ENCODE measurements at regions of chr14 and their contacts with region 1.

Region 1: GRCh38 chr14:100306420-100307219 is at the start of gene SLC25A29:
- DNase-seq: peak; percentile 39 to 89 (median 76)
- ATAC-seq: peak; percentile 77
- H3K4me3 ChIP-seq: peak within 1 kb of the TSS; percentile 60 to 76
- H3K4me3 Mint-ChIP-seq: peak within 1 kb of the TSS; percentile 86
- H3K27ac ChIP-seq: no peak within 1 kb of the TSS
- H3K27ac Mint-ChIP-seq: peak within 1 kb of the TSS; percentile 60
- H3K4me1 ChIP-seq: peaks cover 18% of the 10 kb centered on the region
- H3K4me1 Mint-ChIP-seq: peaks cover 18% of the 10 kb centered on the region
- H3K27me3 ChIP-seq: no peaks in the 10 kb centered on the region
- H3K27me3 Mint-ChIP-seq: no peaks in the 10 kb centered on the region
- CTCF ChIP-seq: no peak
- total RNA-seq, gene SLC25A29: 19.4 to 22.8 TPM

Region 2: DNA sequence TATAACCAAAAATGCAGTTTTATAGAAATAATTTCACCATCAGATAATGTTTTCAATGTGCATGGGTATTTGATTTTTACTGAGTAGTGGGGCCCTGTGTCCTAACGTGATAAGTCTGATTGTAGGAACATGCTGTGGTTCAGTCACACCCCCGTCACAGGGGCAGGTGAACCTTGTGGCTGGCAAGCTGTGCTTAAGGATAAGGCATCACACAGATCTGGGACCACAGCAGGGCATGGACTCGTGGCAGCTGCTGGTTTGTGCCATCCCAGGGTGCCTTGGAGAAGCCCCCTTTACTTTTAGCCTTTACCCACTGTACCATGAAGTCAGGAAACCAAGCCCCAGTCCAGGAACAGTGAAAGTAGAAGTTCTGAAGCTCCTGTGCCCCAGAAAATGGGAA is 808.7 kb before region 1 on chr14:
- CTCF ChIA-PET with region 1: no interaction called
- POLR2A ChIA-PET with region 1: no interaction called
- intact Hi-C with region 1: no loop called
- DNase-seq: no peak
- ATAC-seq: no peak
- H3K4me3 ChIP-seq: no peak overlapping the region
- H3K4me3 Mint-ChIP-seq: no peak overlapping the region
- H3K27ac ChIP-seq: no peak overlapping the region
- H3K27ac Mint-ChIP-seq: no peak overlapping the region
- H3K4me1 ChIP-seq: no peaks in the 10 kb centered on the region
- H3K4me1 Mint-ChIP-seq: peaks cover 7% of the 10 kb centered on the region
- H3K27me3 ChIP-seq: no peaks in the 10 kb centered on the region
- H3K27me3 Mint-ChIP-seq: no peaks in the 10 kb centered on the region
- CTCF ChIP-seq: no peak

Region 3: DNA sequence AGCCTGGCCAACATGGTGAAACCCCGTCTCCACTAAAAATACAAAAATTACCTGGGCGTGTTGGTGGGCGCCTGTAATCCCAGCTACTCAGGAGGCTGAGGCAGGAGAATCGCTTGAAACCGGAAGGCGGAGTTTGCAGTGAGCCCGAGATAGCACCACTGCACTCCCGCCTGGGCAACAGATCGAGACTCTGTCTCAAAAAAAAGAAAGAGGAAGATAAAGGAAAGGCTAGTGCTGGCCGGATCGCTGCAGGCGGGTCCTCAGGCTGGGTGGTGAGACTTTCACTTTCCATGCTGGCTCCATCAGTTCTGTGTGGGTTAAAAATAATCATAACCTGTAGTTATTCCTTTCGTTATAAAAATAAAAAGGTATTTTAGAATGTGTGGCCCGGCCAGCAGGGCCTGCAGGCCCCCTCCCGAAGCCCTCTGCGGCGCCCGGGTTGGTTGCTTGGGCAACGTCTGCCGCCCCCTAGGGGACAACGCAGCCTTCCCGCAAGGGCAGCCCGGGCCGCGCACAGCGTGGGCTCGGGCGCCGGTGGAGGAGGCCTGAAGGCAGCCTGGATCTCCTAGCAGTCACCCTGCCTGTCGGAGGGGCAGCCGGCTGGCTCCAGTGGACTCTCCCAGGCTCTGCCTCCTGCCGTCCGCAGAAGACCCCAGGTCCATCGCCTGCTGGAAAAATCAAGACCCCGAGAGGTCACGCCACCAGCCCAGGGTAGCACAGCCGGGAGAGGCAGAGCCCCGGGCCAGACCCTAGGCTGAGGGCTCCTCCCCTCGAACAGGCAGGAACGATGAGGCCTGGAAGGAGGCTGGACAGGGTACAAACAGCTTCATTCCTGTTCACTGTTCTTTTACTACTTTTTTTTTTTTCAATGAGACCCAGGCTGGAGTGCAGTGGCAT is 11.5 kb after region 1 on chr14:
- CTCF ChIA-PET with region 1: interaction called, 5 read pairs
- POLR2A ChIA-PET with region 1: no interaction called
- intact Hi-C with region 1: loop called in 1 of 2 experiments (anchors 1 kb)
- DNase-seq: peak; percentile 43 to 87 (median 74)
- ATAC-seq: peak; percentile 99
- H3K4me3 ChIP-seq: peak overlapping the region; percentile 53 to 55
- H3K4me3 Mint-ChIP-seq: peak overlapping the region; percentile 76
- H3K27ac ChIP-seq: no peak overlapping the region
- H3K27ac Mint-ChIP-seq: no peak overlapping the region
- H3K4me1 ChIP-seq: peaks cover 8% of the 10 kb centered on the region
- H3K4me1 Mint-ChIP-seq: peaks cover 2% of the 10 kb centered on the region
- H3K27me3 ChIP-seq: no peaks in the 10 kb centered on the region
- H3K27me3 Mint-ChIP-seq: no peaks in the 10 kb centered on the region
- CTCF ChIP-seq: peak; percentile 75

Region 4: GRCh38 chr14:100446572-100446971 is 140.0 kb after region 1 on chr14:
- CTCF ChIA-PET with region 1: no interaction called
- POLR2A ChIA-PET with region 1: no interaction called
- intact Hi-C with region 1: no loop called
- DNase-seq: no peak
- ATAC-seq: no peak
- H3K4me3 ChIP-seq: no peak overlapping the region
- H3K4me3 Mint-ChIP-seq: no peak overlapping the region
- H3K27ac ChIP-seq: no peak overlapping the region
- H3K27ac Mint-ChIP-seq: no peak overlapping the region
- H3K4me1 ChIP-seq: no peaks in the 10 kb centered on the region
- H3K4me1 Mint-ChIP-seq: peaks cover 11% of the 10 kb centered on the region
- H3K27me3 ChIP-seq: no peaks in the 10 kb centered on the region
- H3K27me3 Mint-ChIP-seq: no peaks in the 10 kb centered on the region
- CTCF ChIP-seq: no peak